ENCODE measurements at regions of chr15 and their contacts with region 1.

Region 1: DNA sequence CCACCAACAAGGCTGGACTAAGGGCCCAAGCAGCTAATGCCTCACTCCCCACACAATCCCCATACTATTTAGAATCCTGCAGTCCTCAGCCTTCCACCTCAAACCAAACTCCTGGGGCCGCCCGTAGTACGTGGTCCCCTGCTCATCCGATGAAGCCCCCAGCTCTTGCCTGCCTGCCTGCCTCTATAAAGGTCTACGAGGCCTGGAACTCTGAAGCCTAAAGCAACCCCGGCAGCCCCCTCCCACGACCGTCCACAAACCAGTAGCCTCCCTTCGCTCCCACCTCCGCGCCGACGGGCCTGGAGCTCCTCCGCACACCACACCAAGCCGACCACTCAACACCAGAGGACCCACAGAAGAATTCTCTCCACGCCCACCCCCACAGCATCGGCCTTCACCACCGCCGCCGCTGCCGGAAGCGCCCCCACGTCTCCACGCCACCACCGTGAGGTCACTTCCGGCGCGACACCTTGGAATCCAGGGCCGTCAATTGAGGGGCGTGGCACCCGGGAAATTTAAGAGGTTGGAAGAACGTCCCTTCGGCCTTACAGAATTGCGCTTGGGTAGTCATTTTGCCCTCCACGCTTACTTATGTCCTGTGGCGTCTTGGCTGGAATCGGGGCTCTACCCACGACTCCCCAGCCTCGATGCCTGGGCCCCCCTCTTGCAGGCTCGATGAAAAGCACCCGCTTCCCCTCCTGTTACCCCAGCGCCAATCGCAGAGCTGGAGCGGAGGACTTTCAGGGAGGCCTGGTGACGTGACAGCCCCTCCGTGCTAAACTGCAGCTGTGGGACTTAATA is at the start of gene EDC3:
- DNase-seq: peak; percentile 84
- H3K4me3 ChIP-seq: peak within 1 kb of the TSS; percentile 69 to 80 (median 76)
- H3K27ac ChIP-seq: peak within 1 kb of the TSS; percentile 77
- H3K4me1 ChIP-seq: peaks cover 15% of the 10 kb centered on the region
- H3K27me3 ChIP-seq: no peaks in the 10 kb centered on the region
- CTCF ChIP-seq: no peak
- POLR2A ChIP-seq: peak; percentile 61
- total RNA-seq, gene EDC3: 52.7 and 56.5 TPM in 2 replicates

Region 2: DNA sequence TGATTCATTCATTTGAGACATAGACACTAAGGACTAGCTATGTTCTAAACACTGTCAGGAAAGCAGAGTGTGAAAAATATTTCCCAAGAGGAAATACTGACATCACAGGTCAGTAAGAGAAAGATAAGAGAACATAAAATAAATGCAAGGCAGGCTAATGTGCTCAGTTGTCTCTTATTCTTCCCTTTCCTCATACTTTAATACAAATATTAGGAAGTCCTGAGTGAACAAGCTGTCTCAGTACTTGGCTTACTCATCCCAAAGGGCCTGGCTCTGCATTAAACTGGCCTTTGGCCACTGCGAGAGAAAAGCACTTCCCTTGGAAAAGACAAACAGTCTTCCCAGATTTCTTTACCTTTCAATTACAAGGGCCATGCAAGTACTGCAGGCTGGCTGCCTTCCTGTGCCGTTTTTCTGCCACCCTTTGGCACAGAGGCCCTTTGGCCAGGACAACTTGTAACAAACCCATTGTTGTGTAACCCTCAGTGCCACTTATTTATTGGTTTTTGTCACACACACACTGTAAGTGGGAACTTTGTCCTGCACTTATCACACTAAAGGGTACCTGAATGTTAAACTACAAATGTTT is 31.7 kb before region 1 on chr15:
- CTCF ChIA-PET with region 1: no interaction called
- POLR2A ChIA-PET with region 1: no interaction called
- dilution Hi-C with region 1: no loop called
- intact Hi-C with region 1: loop called (anchors 2 kb)
- DNase-seq: peak; percentile 88
- H3K4me3 ChIP-seq: peak overlapping the region in 1 of 3 experiments; percentile 7
- H3K27ac ChIP-seq: peak overlapping the region; percentile 85
- H3K4me1 ChIP-seq: peaks cover 35% of the 10 kb centered on the region
- H3K27me3 ChIP-seq: no peaks in the 10 kb centered on the region
- CTCF ChIP-seq: no peak
- POLR2A ChIP-seq: peak; percentile 34

Region 3: GRCh38 chr15:74716644-74717043 is 20.8 kb after region 1 on chr15:
- CTCF ChIA-PET with region 1: no interaction called
- POLR2A ChIA-PET with region 1: no interaction called
- dilution Hi-C with region 1: no loop called
- intact Hi-C with region 1: loop called (anchors 2 kb)
- DNase-seq: no peak
- H3K4me3 ChIP-seq: no peak overlapping the region
- H3K27ac ChIP-seq: no peak overlapping the region
- H3K4me1 ChIP-seq: no peaks in the 10 kb centered on the region
- H3K27me3 ChIP-seq: peaks cover 0 to 2% of the 10 kb centered on the region in 2 experiments
- CTCF ChIP-seq: no peak
- POLR2A ChIP-seq: no peak

Region 4: DNA sequence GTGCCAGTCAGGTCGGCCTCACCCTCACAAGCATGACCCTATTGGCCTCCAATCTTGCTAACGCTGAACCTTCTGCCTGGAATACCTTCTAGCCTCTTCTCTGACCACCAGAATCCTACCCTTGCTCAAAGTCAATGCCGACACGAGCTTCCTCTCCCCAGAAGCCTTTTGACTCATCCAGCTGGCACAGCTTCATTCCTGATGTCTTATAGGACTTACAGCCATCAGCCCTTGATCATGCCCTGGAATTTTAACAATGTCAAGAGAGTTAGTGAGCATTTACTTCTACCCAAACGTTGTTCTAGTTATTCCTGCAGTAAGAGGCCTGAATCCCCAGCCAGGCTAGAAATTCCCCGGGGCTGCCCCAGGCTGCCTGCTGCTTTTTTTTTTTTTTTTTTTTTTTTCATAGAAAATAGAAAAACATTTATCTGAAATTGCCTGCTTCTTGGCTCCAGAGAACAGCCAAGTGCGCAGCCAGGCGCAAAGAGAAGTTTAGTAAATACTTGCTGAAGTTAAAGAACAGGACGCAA is 56.8 kb after region 1 on chr15:
- CTCF ChIA-PET with region 1: no interaction called
- POLR2A ChIA-PET with region 1: no interaction called
- dilution Hi-C with region 1: no loop called
- intact Hi-C with region 1: no loop called
- DNase-seq: no peak
- H3K4me3 ChIP-seq: no peak overlapping the region
- H3K27ac ChIP-seq: no peak overlapping the region
- H3K4me1 ChIP-seq: no peaks in the 10 kb centered on the region
- H3K27me3 ChIP-seq: peaks cover 0 to 1% of the 10 kb centered on the region in 2 experiments
- CTCF ChIP-seq: no peak
- POLR2A ChIP-seq: no peak

Region 5: GRCh38 chr15:74978503-74978902 is 282.7 kb after region 1 on chr15:
- CTCF ChIA-PET with region 1: no interaction called
- POLR2A ChIA-PET with region 1: no interaction called
- dilution Hi-C with region 1: no loop called
- intact Hi-C with region 1: no loop called
- DNase-seq: no peak
- H3K4me3 ChIP-seq: no peak overlapping the region
- H3K27ac ChIP-seq: no peak overlapping the region
- H3K4me1 ChIP-seq: no peaks in the 10 kb centered on the region
- H3K27me3 ChIP-seq: no peaks in the 10 kb centered on the region
- CTCF ChIP-seq: no peak
- POLR2A ChIP-seq: no peak

Measured in endothelial cell of umbilical vein (primary cell).